GM12878 (cell line): ENCODE measurements at regions of chr10 and their contacts with region 1.

Region 1: DNA sequence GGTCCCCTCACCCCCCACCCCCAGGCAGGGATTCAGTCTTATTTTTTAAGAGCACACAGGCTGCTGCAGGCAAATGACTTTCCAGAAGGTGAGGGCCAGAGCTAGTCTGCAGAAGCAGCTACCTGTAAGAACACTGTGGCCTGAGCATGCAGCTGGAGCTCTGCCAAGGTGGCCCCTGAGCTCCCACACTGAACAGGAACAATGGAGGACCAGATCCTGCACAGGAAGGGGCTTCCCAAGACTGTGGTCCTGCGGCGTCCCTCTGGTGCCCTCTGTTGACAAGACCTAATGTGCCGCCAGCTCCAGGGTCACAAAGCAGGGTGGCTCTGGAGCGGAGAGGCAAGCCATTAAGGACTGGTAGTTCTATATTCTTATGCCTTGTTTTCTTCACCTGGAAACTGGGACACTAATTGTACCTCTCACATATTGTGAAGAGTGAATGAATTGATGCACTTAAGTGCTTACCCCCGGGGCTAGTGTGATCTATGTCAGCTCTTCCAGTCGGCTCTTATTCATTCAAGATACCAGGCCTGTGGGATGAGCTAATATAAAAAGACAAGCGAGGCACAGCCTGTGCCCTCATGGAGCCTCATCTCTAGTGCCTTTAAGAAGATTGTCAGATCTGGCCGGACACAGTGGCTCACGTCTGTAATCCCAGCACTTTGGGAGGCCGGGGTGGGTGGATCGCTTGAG is 8.0 kb upstream of the BEND7 start:
- DNase-seq: peak; percentile 16
- ATAC-seq: peak; percentile 98
- H3K4me3 ChIP-seq: no peak overlapping the region
- H3K27ac ChIP-seq: no peak overlapping the region
- H3K4me1 ChIP-seq: no peaks in the 10 kb centered on the region
- H3K27me3 ChIP-seq: 0 out of 4 replicates have a peak, but pooled peaks cover 0 to 3% of the 10 kb centered on the region in 2 experiments
- CTCF ChIP-seq: peak; percentile 69 to 79 (median 74)
- EP300 ChIP-seq: no peak
- POLR2A ChIP-seq: no peak
- RAD21 ChIP-seq: peak; percentile 67

Region 2: DNA sequence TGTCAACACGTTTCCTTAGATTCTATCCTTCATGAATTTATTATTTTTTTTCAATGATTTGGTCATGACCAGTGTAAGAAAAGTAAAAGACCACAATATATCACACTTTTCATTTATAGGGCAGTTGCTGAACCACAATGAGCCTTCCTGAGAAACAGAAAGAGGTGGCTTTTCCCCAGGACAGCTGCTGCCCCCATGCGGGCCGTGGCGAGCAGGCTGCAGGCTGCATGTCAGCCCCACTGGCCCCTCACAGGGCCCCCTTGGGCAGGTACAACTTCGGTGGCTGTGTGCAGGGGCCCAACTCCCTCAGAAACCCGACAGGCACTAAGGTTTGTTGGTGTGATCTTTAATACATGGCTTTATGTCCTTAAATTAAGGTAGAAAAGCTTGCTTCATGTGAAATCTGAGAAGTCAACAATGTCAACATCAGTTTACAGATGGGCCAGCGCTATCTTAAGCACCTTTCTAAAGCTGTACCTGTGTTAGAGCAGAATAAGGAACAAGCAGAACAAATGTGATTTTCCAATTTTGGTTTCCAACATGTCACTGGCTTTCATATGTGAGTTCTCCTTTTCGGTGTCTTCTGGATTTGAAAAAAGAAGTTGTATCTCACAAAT is 18.6 kb before region 1 on chr10:
- CTCF ChIA-PET with region 1: interaction called, 3 read pairs
- POLR2A ChIA-PET with region 1: no interaction called
- RAD21 ChIA-PET with region 1: no interaction called
- SMC1A ChIA-PET with region 1: interaction called, 10 read pairs
- in situ Hi-C with region 1: no loop called
- intact Hi-C with region 1: no loop called
- DNase-seq: no peak
- ATAC-seq: peak; percentile 80
- H3K4me3 ChIP-seq: no peak overlapping the region
- H3K27ac ChIP-seq: no peak overlapping the region
- H3K4me1 ChIP-seq: no peaks in the 10 kb centered on the region
- H3K27me3 ChIP-seq: peaks cover 0 to 3% of the 10 kb centered on the region in 2 experiments; a peak in 1 of 4 replicates
- CTCF ChIP-seq: peak; percentile 4 to 55 (median 53); a peak in 4 of 6 replicates
- EP300 ChIP-seq: no peak
- POLR2A ChIP-seq: no peak
- RAD21 ChIP-seq: peak; percentile 37; the same call in 1 of the 2 replicates